Dorsolateral prefrontal cortex (tissue), 120 donors: ENCODE measurements at regions of chr9 and their contacts with region 1.

Region 1: DNA sequence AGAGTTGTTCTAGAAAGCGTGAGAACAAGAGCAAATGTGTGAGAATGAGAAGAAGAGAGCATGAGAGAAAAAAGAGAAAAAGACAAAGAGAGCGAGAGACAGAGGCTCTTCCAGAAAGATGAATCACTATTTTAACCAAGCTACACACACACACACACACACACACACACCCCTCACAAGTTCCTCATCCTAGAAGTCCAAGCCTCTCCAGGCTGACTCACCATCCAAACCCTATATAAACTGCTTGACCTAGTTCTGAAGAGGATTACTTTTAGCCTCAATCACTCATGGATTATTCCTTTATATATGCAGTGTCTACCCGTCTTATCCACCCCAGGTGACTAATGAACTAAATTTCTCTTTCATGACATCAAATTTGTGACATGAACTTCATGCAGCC is 37.6 kb downstream of the C9orf57 start:
- DNase-seq: peak in 1 of 10 donors; percentile 36
- H3K4me3 ChIP-seq: no peak overlapping the region
- H3K27ac ChIP-seq: peak overlapping the region in 2 of 59 donors; percentile 55 to 59
- H3K27me3 ChIP-seq: no peaks in the 10 kb centered on the region
- CTCF ChIP-seq: no peak

Region 2: GRCh38 chr9:71604197-71605063 is 418.4 kb before region 1 on chr9:
- intact Hi-C with region 1: loop called in 1 of 2 experiments (anchors 10 kb)
- DNase-seq: peak in 9 of 10 donors; percentile 18 to 75 (median 53)
- H3K4me3 ChIP-seq: no peak overlapping the region
- H3K27ac ChIP-seq: no peak overlapping the region
- H3K27me3 ChIP-seq: no peaks in the 10 kb centered on the region
- CTCF ChIP-seq: peak; percentile 41 to 87 (median 75)

Region 3: GRCh38 chr9:71806901-71807307 is 215.9 kb before region 1 on chr9:
- intact Hi-C with region 1: loop called (anchors 2 kb)
- DNase-seq: peak; percentile 32 to 75 (median 58)
- H3K4me3 ChIP-seq: peak overlapping the region in 1 of 59 donors; percentile 3
- H3K27ac ChIP-seq: peak overlapping the region in 1 of 59 donors; percentile 29
- H3K27me3 ChIP-seq: no peaks in the 10 kb centered on the region
- CTCF ChIP-seq: peak; percentile 56 to 99 (median 84)

Region 4: GRCh38 chr9:71984403-71984802 is 38.4 kb before region 1 on chr9:
- intact Hi-C with region 1: no loop called
- DNase-seq: no peak
- H3K4me3 ChIP-seq: no peak overlapping the region
- H3K27ac ChIP-seq: no peak overlapping the region
- H3K27me3 ChIP-seq: no peaks in the 10 kb centered on the region
- CTCF ChIP-seq: no peak